Activated CD4-positive, alpha-beta T cell treated with anti-CD3 and anti-CD28 coated beads, Interleukin-2, amount 10 ng/mL, durations not matched to agents 7 days and 5 days (primary cell): ENCODE measurements at regions of chr1 and their contacts with region 1.

Region 1: DNA sequence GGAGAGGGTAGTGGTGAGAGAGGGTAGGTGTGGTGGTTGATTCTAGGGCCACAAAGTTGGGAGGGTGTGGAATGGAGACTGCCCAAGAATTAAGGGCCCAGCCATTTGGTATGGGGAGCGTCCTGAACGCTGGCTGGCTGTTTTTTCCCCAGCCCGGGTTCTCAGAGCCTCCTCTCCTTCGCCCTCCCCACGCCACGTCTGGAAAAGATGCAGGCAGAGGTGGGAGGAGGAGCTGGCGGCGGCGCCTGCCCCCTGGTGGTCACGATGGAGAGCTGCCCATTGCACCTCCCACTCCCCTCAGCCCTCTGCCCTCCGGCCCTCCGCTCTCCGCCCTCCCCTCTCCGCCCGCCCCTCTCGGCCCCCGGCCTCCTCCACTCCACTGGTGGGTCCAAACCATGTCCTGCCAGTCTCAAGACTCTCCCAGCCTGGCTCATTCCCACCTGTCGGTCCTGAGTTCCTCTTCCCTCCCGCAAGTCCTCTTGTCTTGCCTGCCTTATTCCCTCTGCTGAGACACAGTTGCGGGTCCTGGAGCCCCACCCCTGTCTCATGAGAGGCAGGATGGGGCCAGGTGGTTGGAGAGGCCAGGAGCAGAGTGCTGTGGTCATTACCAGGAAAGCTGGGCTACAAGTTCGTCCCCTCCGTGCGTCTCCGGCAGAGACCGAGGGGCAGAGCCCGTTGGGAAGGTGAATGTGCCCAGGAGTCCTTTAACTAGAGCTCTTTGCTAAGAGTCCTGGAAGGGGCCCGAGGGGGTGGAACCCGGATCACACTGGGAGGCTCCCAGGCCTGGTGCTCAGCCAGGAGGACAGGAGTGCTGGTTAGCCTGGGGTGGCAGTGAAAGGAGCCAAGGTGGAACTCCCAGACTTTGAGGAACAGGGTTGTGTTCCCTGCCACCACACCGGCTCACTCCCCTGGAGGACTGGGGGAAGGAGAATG is 22.6 kb downstream of the ETNK2 start:
- DNase-seq: peak; percentile 63
- H3K4me3 Mint-ChIP-seq: no peak overlapping the region
- H3K27ac Mint-ChIP-seq: no peak overlapping the region
- H3K4me1 Mint-ChIP-seq: peaks cover 11% of the 10 kb centered on the region
- H3K27me3 Mint-ChIP-seq: no peaks in the 10 kb centered on the region

Region 2: DNA sequence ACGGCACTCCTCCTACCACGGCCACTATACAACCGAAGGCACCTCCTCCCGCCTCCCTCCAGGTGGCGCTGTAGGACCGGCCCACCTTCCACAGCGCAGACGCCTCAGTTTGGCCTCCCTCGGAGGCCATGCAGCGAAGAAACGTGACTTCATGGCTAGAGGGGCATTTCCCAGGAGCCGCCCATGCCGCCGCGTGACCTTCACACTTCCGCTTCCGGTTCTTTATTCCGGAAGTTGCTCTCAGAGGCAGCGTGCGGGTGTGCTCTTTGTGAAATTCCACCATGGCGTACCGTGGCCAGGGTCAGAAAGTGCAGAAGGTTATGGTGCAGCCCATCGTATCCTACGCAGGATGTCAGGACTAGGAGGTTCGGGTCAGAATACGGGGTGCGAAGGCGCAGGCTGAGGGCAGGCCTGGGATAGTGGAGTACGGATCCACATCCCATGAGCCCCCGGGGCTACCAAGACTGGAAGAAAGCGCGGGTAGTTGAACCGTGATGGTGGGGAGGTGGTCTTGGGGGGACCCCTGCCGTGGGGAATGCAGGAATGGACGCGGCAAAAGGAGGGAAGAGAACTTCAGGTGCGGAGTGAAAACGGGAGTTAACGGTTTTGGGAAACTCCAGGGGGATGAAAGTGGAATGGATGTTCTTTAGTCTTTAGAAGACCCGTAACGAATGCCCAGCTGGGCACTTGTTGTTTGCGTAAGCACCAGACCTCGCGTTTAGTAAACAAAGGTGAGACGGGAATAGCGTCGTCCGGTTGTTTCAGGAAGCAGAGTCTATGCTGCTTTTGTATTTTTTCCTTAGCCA is 267.6 kb before region 1 on chr1 and contains the start of gene SNRPE:
- CTCF ChIA-PET with region 1: interaction called, 29 read pairs
- POLR2A ChIA-PET with region 1: no interaction called
- DNase-seq: peak; percentile 97
- H3K4me3 Mint-ChIP-seq: peak within 1 kb of the TSS; percentile 98
- H3K27ac Mint-ChIP-seq: peak within 1 kb of the TSS; percentile 97
- H3K4me1 Mint-ChIP-seq: peaks cover 28% of the 10 kb centered on the region
- H3K27me3 Mint-ChIP-seq: no peaks in the 10 kb centered on the region
- total RNA-seq, gene SNRPE: 153 to 187 TPM

Region 3: DNA sequence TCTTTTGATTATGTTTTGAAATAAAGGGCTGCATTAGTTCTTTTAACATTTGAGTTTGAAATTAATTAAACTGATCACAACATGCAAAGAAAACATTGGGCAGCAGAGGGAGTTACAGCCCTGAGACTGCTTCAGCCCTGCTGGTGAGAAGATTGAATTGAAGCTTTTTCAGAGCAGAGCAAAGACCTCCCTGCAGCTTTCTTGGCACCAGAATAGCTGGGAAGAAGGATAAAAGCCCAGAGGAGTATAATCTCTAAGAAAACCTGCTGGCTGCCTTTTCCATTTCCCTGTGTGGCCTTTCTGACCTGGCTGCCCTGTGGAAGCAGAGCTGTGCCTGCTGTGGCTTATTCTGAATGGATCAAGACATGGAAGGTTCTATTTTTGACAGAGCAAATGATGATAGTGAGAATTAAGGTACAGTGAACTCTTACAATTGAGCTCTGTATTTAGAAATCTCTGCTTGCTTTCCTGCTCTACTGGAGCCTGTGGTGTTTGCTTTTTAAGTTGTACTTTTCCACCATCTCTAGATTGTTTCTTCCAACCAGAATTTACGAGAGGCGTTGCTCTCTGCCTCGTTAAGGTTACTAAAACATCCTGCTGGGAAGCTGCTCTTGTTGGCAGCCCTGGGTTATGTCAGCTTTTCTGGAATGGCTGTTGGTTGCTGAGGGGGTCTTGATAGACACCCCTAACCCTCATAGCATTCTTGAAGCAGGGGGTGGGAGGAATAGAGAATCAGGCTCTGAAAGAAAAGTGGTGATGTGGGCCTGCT is 257.9 kb before region 1 on chr1:
- CTCF ChIA-PET with region 1: interaction called, 31 read pairs
- POLR2A ChIA-PET with region 1: no interaction called
- DNase-seq: peak; percentile 34
- H3K4me3 Mint-ChIP-seq: no peak overlapping the region
- H3K27ac Mint-ChIP-seq: no peak overlapping the region
- H3K4me1 Mint-ChIP-seq: no peaks in the 10 kb centered on the region
- H3K27me3 Mint-ChIP-seq: no peaks in the 10 kb centered on the region

Region 4: GRCh38 chr1:204115116-204115515 is 14.1 kb before region 1 on chr1:
- CTCF ChIA-PET with region 1: interaction called, 17 read pairs
- POLR2A ChIA-PET with region 1: no interaction called
- DNase-seq: no peak
- H3K4me3 Mint-ChIP-seq: no peak overlapping the region
- H3K27ac Mint-ChIP-seq: no peak overlapping the region
- H3K4me1 Mint-ChIP-seq: no peaks in the 10 kb centered on the region
- H3K27me3 Mint-ChIP-seq: no peaks in the 10 kb centered on the region

Region 5: DNA sequence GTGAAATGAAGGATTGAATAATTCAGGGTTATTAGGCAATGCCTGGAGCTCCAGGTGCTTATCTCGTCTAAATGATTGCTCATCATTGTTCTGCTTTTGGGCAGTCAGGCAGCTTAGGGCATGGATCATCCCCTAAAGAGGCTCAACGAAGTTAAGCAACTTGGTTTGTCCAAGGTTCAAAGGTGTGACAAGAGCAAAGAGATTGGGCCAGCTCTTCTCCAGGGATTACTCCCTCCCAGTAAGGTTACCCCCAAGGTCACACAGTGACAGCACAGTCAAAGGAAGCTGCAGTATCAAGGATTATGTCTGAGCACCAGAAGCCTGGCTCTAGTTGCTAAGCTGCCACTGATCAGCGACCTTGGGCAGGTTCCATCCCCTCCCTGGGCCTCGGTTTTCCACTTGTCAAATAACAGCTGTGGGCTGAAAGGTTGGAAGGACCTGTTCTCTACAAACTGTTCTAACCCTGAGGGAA is 15.8 kb after region 1 on chr1:
- CTCF ChIA-PET with region 1: interaction called, 38 read pairs
- POLR2A ChIA-PET with region 1: no interaction called
- DNase-seq: no peak
- H3K4me3 Mint-ChIP-seq: no peak overlapping the region
- H3K27ac Mint-ChIP-seq: no peak overlapping the region
- H3K4me1 Mint-ChIP-seq: no peaks in the 10 kb centered on the region
- H3K27me3 Mint-ChIP-seq: peaks cover 1% of the 10 kb centered on the region

Region 6: DNA sequence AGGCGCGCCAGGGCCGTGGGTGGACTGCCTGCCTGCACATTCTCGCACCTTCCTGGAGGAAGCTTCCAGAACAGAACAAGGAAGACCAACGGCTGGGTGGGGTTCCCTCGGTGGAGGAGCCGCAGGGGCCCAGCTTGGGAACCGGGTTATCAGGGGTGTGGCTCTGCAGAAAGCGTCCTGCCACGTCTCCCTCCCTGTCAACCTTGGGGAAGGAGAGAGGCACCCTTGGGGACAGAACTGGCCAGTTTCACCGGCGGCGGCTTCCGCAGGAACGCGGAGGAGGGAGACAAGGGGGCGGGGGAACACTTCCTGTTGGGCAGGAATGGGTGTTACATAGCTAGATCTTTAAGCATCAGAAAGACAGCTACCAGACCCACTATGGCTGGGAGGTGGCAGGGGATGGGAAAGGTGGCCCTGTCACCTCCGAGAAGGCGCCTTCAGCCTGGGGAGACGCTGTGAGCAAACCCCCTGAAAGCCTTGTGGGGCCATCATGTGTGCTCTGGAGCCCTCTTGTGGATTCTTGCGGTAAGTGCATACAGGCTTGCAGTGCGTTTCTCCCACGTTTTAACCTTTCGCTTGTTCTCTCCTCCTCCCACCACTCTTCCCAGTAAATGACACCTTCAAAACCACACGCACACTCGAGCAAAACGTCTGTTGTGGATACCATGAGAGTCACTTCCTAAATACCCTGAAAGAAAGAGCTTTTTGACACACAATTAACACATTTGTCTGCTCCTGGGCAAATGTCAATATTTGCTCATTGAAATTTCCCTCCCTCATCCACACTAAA is 234.3 kb after region 1 on chr1:
- CTCF ChIA-PET with region 1: no interaction called
- POLR2A ChIA-PET with region 1: no interaction called
- DNase-seq: peak; percentile 79
- H3K4me3 Mint-ChIP-seq: peak overlapping the region; percentile 55
- H3K27ac Mint-ChIP-seq: peak overlapping the region; percentile 58
- H3K4me1 Mint-ChIP-seq: peaks cover 11% of the 10 kb centered on the region
- H3K27me3 Mint-ChIP-seq: peaks cover 4% of the 10 kb centered on the region

Region 7: DNA sequence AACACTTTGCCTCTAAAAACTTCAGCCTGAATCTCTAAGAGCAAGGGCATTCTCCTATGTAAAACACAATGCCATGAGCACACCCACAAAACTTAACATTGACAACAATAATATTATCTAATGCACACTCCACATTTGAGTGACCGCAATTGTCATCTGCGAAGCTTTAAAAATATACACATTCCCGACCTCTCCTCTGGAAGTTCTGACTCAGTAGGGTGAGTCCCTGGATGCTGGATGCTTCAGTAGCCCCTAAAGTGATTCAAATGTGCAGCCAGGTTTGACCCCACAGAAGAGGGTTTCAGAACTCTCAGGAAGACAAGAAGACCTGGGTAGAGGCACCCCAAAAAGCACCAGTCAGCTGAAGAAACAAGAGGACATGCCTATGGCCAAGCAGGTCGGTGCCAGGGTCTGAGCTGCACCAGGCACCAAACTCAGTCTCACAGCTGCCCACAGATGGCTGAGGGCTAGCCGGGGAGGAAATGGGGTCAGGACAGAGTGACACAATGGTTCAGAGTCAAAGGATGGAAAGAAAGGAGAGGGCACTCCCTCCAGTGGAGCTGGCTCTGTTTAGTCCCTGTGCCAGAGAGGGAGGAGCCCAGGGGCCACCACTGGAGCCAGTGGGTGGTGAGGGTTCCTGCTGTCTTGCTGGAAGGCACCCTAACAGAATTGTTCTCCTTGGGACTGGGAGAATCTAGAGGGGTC is 348.0 kb after region 1 on chr1:
- CTCF ChIA-PET with region 1: no interaction called
- POLR2A ChIA-PET with region 1: no interaction called
- DNase-seq: no peak
- H3K4me3 Mint-ChIP-seq: no peak overlapping the region
- H3K27ac Mint-ChIP-seq: no peak overlapping the region
- H3K4me1 Mint-ChIP-seq: peaks cover 28% of the 10 kb centered on the region
- H3K27me3 Mint-ChIP-seq: no peaks in the 10 kb centered on the region